ENCODE measurements at regions of chr11 and their contacts with region 1.

Region 1: DNA sequence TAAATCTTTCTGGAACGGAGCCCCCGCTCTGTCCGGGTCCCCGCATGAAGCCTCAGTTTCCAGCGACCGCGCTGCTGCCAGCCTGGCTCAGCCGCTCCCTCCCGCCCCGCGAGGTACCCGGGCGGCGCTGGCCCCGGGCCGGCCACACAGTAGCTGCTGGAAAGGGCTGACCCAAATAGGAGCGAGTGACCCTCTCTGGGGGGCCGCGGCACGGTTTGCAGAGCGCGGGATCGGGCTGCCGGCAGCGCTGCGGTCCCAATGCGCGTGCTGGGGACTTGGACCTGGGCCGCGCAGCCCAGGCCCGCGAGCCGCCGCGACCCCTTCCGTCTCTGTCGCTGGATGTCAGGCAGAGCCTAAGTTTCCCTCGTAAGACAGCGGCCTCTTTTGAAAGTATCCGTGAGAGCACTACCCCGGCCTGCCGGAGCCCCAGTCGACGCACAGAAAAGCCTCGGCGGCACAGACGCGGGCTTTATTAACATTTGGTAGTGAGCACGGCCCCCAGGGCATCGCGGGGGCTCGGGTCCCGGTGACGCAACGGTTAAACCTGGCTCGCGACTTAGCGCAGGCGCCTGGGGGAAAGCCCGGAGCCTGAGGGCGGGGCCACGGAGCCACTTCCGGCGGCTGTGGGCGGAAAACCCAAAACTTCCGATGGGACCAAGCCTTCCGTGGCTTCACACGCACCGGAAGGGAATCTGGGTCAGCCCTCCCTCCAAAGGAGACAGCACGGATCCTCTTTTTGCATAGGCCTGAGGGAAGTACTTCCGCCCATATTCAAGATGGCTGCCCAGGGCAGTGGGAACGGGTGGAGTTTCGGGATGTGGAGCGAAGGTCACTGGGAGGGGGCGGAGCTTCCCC is 14.9 kb downstream of the BAD start:
- DNase-seq: peak; percentile 99
- ATAC-seq: peak; percentile 69
- H3K4me3 Mint-ChIP-seq: peak overlapping the region; percentile 96
- H3K27ac Mint-ChIP-seq: peak overlapping the region; percentile 96
- H3K4me1 Mint-ChIP-seq: peaks cover 23% of the 10 kb centered on the region
- H3K27me3 Mint-ChIP-seq: no peaks in the 10 kb centered on the region

Region 2: GRCh38 chr11:64204464-64204989 is 65.1 kb before region 1 on chr11:
- POLR2A ChIA-PET with region 1: interaction called, 94 read pairs
- DNase-seq: peak; percentile 76
- ATAC-seq: peak; percentile 39
- H3K4me3 Mint-ChIP-seq: peak overlapping the region; percentile 67
- H3K27ac Mint-ChIP-seq: peak overlapping the region; percentile 87
- H3K4me1 Mint-ChIP-seq: peaks cover 34% of the 10 kb centered on the region
- H3K27me3 Mint-ChIP-seq: no peaks in the 10 kb centered on the region

Region 3: GRCh38 chr11:64240394-64241174 is 29.0 kb before region 1 on chr11 and contains the start of gene FKBP2:
- POLR2A ChIA-PET with region 1: interaction called, 55 read pairs
- DNase-seq: peak; percentile 99
- ATAC-seq: peak; percentile 75
- H3K4me3 Mint-ChIP-seq: peak within 1 kb of the TSS; percentile 96
- H3K27ac Mint-ChIP-seq: peak within 1 kb of the TSS; percentile 98
- H3K4me1 Mint-ChIP-seq: peaks cover 24% of the 10 kb centered on the region
- H3K27me3 Mint-ChIP-seq: no peaks in the 10 kb centered on the region
- total RNA-seq, gene FKBP2: 27.7 to 28.1 TPM

Region 4: DNA sequence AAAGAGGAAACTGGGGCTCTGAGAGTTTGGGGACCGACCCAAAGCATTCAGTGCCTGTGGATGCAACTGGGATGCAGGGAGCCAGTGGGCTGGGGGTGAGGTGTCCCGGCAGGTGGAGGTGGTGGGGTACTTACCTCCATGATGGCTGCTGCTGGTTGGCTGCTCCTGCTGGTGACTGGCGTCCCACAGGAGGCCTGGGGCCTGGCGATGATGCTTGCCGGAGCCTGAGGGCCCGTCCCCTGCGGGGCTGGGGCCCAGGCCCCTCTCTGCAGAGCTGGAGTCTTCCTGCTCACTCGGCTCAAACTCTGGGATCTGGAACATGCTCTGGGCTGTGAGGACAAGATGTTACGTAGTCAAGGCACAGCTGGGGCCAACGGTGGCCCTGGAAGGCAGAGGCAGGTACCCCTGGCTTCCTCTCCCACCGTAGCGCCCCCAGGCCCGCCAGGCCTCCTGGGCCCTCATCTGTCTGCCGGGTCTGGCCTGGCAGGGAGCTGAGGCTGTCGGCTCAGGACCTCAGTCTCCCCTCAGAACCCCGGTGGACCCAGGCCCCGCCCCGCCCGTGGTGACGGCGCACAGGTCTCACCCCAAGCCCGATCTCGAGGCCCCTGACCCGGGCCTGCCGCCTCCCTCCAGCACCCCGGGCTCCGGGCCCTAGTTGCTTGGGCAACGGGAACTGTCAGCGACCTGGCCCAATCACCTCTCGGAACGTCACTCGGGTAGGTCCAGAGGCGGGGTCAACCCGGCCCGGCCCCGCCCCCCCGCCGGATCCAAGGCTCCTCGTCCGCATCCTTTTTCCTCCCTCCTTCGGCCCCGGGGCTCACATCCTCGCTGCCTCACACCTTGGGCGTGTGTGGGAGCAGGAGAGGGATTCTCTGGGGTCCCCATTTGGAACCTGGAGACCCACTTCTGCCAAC is 14.7 kb after region 1 on chr11 and contains the start of gene BAD:
- POLR2A ChIA-PET with region 1: interaction called, 72 read pairs
- DNase-seq: peak; percentile 89
- ATAC-seq: peak; percentile 84
- H3K4me3 Mint-ChIP-seq: peak within 1 kb of the TSS; percentile 85
- H3K27ac Mint-ChIP-seq: peak within 1 kb of the TSS; percentile 86
- H3K4me1 Mint-ChIP-seq: peaks cover 8% of the 10 kb centered on the region
- H3K27me3 Mint-ChIP-seq: no peaks in the 10 kb centered on the region
- total RNA-seq, gene BAD: 32.9 to 35.8 TPM

Region 5: DNA sequence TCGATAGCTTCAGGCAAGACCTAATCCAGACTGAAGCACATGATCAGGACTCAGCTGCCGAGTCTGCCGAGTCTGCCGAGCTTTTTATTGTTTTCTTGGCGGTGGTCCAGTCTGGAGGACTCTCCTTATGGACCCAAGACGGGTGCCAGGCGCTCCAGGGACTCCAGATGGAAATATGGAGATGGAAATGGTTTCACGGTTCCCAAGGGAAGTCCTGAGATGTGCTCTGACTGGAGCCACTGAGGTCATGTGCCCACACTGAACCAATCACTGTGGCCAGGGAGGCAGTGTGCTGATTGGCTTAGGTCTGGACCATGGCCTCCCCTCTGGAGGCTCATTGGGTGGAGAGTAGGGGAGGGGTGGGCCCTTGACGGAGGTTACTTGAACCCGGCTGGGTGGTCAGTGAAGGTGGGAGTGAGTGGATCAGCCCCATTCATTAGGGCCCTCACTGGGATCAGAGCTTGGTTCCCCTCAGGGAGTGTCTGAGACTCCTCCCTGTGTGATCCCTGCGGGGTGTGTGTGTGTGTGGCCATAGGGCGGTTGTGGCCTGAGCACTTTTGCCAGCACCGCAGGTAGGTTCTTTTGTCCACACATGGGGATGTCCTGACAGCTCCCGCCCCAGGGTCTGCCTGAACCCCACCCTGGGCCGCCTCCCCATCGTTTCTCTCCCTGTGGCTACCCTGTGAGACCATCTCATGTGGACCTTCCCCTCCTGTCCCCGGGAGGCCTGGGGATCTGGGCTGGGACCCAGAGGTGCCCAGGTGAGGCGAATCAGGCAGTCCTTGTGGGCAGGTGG is 103.4 kb after region 1 on chr11:
- POLR2A ChIA-PET with region 1: no interaction called
- DNase-seq: no peak
- ATAC-seq: no peak
- H3K4me3 Mint-ChIP-seq: no peak overlapping the region
- H3K27ac Mint-ChIP-seq: no peak overlapping the region
- H3K4me1 Mint-ChIP-seq: no peaks in the 10 kb centered on the region
- H3K27me3 Mint-ChIP-seq: no peaks in the 10 kb centered on the region

Measured in activated naive CD8-positive, alpha-beta T cell treated with anti-CD3 and anti-CD28 coated beads, Interleukin-2, amount 10 ng/mL, durations not matched to agents 7 days and 5 days (primary cell).